CD8-positive, alpha-beta T cell (primary cell): ENCODE measurements at regions of chr19 and their contacts with region 1.

Region 1: GRCh38 chr19:32570081-32570785 is 10.8 kb upstream of the PDCD5 start:
- DNase-seq: peak; percentile 19 to 77 (median 60)
- ATAC-seq: peak; percentile 75
- H3K4me3 ChIP-seq: no peak overlapping the region
- H3K4me3 Mint-ChIP-seq: peak overlapping the region; percentile 43
- H3K27ac ChIP-seq: no peak overlapping the region
- H3K27ac Mint-ChIP-seq: no peak overlapping the region
- H3K4me1 ChIP-seq: peaks cover 8% of the 10 kb centered on the region
- H3K4me1 Mint-ChIP-seq: peaks cover 17% of the 10 kb centered on the region
- H3K27me3 ChIP-seq: peaks cover 3 to 8% of the 10 kb centered on the region in 2 experiments
- H3K27me3 Mint-ChIP-seq: peaks cover 15% of the 10 kb centered on the region
- CTCF ChIP-seq: peak; percentile 66

Region 2: GRCh38 chr19:30669329-30670010 is 1900.8 kb before region 1 on chr19:
- CTCF ChIA-PET with region 1: interaction called, 3 read pairs
- POLR2A ChIA-PET with region 1: no interaction called
- intact Hi-C with region 1: loop called in 1 of 2 experiments (anchors 1 kb)
- DNase-seq: peak in 8 of 9 experiments; percentile 11 to 59 (median 41)
- ATAC-seq: no peak
- H3K4me3 ChIP-seq: no peak overlapping the region
- H3K4me3 Mint-ChIP-seq: no peak overlapping the region
- H3K27ac ChIP-seq: no peak overlapping the region
- H3K27ac Mint-ChIP-seq: no peak overlapping the region
- H3K4me1 ChIP-seq: no peaks in the 10 kb centered on the region
- H3K4me1 Mint-ChIP-seq: no peaks in the 10 kb centered on the region
- H3K27me3 ChIP-seq: peaks cover 0 to 6% of the 10 kb centered on the region in 2 experiments
- H3K27me3 Mint-ChIP-seq: peaks cover 36% of the 10 kb centered on the region
- CTCF ChIP-seq: peak; percentile 66

Region 3: GRCh38 chr19:30682999-30683536 is 1887.2 kb before region 1 on chr19:
- CTCF ChIA-PET with region 1: no interaction called
- POLR2A ChIA-PET with region 1: no interaction called
- intact Hi-C with region 1: loop called in 1 of 2 experiments (anchors 5 kb)
- DNase-seq: peak in 8 of 9 experiments; percentile 27 to 61 (median 44)
- ATAC-seq: no peak
- H3K4me3 ChIP-seq: no peak overlapping the region
- H3K4me3 Mint-ChIP-seq: no peak overlapping the region
- H3K27ac ChIP-seq: no peak overlapping the region
- H3K27ac Mint-ChIP-seq: no peak overlapping the region
- H3K4me1 ChIP-seq: no peaks in the 10 kb centered on the region
- H3K4me1 Mint-ChIP-seq: no peaks in the 10 kb centered on the region
- H3K27me3 ChIP-seq: no peaks in the 10 kb centered on the region
- H3K27me3 Mint-ChIP-seq: peaks cover 35% of the 10 kb centered on the region
- CTCF ChIP-seq: peak; percentile 68

Region 4: DNA sequence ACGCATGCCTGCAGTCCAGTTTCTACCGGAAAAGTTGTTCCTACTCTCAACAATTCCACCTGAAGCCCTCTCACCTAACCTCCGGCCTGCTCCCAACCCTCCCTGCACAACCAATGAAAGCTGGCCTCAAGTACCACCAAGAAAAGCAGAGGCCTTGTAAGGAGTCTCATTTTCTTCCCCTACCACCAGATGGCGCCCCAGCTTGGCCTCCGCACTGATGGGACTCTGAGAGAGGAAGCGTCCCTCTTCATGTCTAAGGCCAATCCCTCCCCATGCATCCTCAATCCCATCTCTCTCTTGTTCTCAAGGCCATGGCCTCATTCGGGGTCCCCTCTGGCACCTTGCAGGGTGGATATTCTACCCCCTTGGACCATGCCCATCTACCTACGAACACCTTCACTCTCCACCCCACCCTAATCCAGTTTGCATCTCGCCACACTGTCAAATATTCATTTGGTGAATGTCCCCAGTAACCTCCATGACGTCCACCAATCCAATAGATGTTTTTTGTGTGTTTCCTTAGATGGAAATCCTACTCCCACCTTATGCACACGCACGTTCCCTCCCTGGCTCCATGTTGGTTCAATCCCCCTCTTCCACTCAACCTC is 1785.3 kb before region 1 on chr19:
- CTCF ChIA-PET with region 1: no interaction called
- POLR2A ChIA-PET with region 1: no interaction called
- intact Hi-C with region 1: loop called in 1 of 2 experiments (anchors 2 kb)
- DNase-seq: peak; percentile 18 to 72 (median 51)
- ATAC-seq: no peak
- H3K4me3 ChIP-seq: no peak overlapping the region
- H3K4me3 Mint-ChIP-seq: no peak overlapping the region
- H3K27ac ChIP-seq: no peak overlapping the region
- H3K27ac Mint-ChIP-seq: no peak overlapping the region
- H3K4me1 ChIP-seq: no peaks in the 10 kb centered on the region
- H3K4me1 Mint-ChIP-seq: no peaks in the 10 kb centered on the region
- H3K27me3 ChIP-seq: no peaks in the 10 kb centered on the region
- H3K27me3 Mint-ChIP-seq: peaks cover 9% of the 10 kb centered on the region
- CTCF ChIP-seq: peak; percentile 44

Region 5: DNA sequence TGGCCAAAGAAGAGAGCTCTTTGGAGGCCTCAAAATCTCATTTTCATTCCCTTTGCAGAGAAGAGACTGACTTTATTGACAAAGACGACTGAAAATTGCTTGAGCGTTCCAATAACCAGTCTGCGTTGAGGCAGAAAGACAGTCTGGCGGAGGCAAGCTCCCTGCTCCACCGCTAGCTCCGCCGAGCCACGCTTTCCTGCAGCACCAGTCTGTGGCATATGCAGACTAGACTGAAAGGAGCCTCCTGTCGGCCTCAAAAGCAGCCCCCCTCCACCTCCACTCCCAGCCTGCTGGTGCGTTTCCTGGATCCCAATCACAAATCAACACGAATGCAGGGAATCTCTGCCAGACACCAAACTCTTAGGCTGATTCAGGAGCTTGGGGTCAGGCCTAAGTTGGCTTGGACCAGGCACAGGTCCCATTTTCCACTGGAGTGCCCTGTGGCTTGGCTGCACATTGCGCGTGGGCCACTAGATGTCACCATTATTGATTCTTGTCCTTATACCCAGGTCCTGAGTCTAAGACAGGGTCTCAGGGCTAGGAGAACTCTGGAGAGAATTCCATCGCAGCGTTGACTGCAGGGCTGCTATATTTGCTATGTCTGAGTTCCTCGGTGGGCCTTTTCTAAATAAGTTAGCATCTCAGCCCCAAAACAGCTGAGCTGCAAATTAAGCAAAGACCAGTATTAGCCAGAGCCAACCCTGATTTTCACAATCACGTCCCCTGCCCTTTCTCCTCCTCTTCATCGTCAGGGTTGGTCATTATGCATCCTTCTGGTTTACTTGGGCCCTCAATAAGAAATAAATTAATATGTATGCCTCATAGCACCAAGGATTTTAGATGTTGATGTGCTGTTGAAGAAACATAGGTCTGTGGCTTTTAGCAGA is 230.0 kb before region 1 on chr19:
- CTCF ChIA-PET with region 1: interaction called, 16 read pairs
- POLR2A ChIA-PET with region 1: no interaction called
- intact Hi-C with region 1: loop called in 1 of 2 experiments (anchors 1 kb)
- DNase-seq: peak; percentile 4 to 61 (median 43)
- ATAC-seq: peak; percentile 57
- H3K4me3 ChIP-seq: no peak overlapping the region
- H3K4me3 Mint-ChIP-seq: no peak overlapping the region
- H3K27ac ChIP-seq: no peak overlapping the region
- H3K27ac Mint-ChIP-seq: no peak overlapping the region
- H3K4me1 ChIP-seq: no peaks in the 10 kb centered on the region
- H3K4me1 Mint-ChIP-seq: no peaks in the 10 kb centered on the region
- H3K27me3 ChIP-seq: no peaks in the 10 kb centered on the region
- H3K27me3 Mint-ChIP-seq: no peaks in the 10 kb centered on the region
- CTCF ChIP-seq: peak; percentile 55

Region 6: GRCh38 chr19:32464279-32464678 is 106.0 kb before region 1 on chr19:
- CTCF ChIA-PET with region 1: interaction called, 8 read pairs
- POLR2A ChIA-PET with region 1: no interaction called
- intact Hi-C with region 1: loop called (anchors 2 to 5 kb)
- DNase-seq: peak in 2 of 9 experiments; percentile 14 to 24
- ATAC-seq: no peak
- H3K4me3 ChIP-seq: no peak overlapping the region
- H3K4me3 Mint-ChIP-seq: no peak overlapping the region
- H3K27ac ChIP-seq: no peak overlapping the region
- H3K27ac Mint-ChIP-seq: no peak overlapping the region
- H3K4me1 ChIP-seq: no peaks in the 10 kb centered on the region
- H3K4me1 Mint-ChIP-seq: no peaks in the 10 kb centered on the region
- H3K27me3 ChIP-seq: no peaks in the 10 kb centered on the region
- H3K27me3 Mint-ChIP-seq: no peaks in the 10 kb centered on the region
- CTCF ChIP-seq: no peak